ENCODE measurements at regions of chr4 and their contacts with region 1.

Region 1: DNA sequence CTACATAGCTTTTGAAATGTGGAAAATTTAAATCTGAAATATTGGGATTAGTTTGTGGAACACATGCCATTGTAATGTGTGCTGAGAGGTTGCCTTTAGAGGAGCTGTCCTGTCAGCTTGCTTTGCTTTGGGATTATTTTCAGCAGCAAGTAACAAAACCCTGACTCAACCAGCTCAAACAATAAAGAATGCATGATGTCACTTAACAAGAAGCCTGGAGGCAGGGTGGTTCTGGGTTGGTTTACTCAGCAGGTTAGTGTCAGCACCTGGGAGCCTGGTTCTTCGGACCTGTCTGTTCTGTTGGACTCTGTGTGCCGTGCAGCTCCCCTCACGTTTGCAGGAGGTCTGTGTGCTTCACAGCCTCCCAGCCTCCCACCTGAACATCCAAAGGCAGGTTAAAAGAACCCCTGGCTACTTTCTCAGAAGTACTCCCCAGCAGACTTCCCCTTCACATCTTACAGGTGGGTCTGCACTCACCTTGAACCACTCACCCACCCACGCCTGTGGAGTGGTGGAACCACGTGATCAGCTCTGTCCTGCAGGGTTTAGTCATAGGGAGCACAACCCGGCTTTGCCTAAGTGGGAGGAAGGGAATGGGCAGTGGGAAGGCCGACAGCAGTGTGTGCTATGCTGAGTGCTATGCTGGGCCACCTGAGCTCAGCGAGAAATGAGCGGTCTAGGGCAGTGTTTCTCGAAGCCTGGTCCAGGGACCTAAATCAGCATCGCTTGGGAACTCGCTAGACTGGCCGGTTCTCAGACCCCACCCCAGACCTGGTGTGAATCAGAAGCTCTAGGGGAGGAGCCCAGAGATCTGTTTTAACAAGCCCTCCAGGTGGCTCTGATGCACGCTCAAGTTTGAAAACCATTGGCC is 20.4 kb downstream of the TMEM131L start:
- DNase-seq: peak; percentile 61 to 85
- H3K4me3 ChIP-seq: no peak overlapping the region
- H3K27ac ChIP-seq: peak overlapping the region; percentile 83
- H3K4me1 ChIP-seq: peaks cover 24% of the 10 kb centered on the region
- H3K27me3 ChIP-seq: no peaks in the 10 kb centered on the region
- CTCF ChIP-seq: no peak

Region 2: GRCh38 chr4:152996108-152996571 is 490.4 kb before region 1 on chr4:
- CTCF ChIA-PET with region 1: no interaction called
- POLR2A ChIA-PET with region 1: no interaction called
- intact Hi-C with region 1: no loop called
- DNase-seq: peak; percentile 78 to 85
- H3K4me3 ChIP-seq: peak overlapping the region; percentile 31; the same call in 1 of the 2 replicates
- H3K27ac ChIP-seq: peak overlapping the region; percentile 84
- H3K4me1 ChIP-seq: peaks cover 53% of the 10 kb centered on the region
- H3K27me3 ChIP-seq: no peaks in the 10 kb centered on the region
- CTCF ChIP-seq: no peak

Region 3: DNA sequence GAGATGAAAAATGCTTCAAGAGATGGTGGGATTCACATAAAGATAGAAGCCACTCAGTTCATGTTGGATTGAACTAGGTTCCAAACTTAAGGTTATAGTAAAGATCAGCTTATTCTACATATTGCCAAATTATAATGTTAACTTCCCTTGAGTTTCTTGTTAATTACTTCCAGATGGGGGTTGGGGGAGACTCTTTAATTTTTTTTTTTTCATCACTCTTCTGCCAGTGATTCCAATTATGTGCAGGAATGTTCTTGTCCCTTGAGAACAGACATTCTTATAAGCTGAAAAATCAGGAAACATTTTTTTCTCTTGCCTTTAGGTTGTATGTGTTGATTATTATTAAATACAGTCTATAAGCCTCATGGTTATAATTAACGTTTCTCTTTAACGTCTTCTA is 112.1 kb before region 1 on chr4:
- CTCF ChIA-PET with region 1: no interaction called
- POLR2A ChIA-PET with region 1: no interaction called
- intact Hi-C with region 1: no loop called
- DNase-seq: no peak
- H3K4me3 ChIP-seq: no peak overlapping the region
- H3K27ac ChIP-seq: no peak overlapping the region
- H3K4me1 ChIP-seq: no peaks in the 10 kb centered on the region
- H3K27me3 ChIP-seq: no peaks in the 10 kb centered on the region
- CTCF ChIP-seq: no peak

Region 4: DNA sequence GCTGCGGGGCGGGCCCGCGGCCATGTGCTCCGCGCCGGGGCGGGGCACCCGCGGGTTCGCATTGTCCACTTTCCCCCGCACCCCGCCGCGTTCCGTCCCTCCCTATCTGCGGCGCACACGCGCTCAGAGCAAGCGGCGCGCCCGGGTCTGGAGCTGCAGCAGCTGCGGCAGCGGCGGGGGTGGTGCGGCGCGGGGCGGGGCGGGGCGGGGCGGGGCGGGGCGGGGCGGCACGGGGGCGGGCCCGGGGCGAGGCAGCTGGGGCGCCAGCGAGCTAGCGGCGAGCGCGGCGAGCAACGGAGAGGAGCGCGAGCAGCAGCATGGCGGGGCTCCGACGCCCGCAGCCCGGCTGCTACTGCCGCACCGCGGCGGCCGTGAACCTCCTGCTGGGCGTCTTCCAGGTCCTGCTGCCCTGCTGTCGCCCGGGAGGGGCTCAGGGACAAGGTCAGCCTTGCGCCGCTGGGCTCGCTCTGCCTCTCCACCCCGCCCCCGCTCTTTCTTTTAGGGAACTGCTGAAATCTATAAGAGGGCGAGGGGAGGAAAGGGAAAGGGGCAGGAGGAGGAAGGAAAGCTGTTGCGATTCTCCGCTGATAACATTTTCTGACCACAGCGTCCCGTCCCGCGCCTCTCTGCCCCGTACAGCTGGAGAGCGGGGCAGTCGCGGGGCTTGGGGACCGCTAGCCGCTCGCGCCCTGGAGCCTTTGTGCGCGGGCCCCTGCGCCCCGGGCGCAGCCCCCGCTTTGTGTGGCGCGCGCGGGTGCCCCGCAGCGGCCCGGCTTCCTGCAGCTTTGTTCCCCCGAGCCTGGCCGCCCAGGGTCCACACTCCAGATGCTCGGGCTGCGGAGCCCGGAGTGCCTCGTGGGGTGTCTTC is 20.2 kb before region 1 on chr4 and contains the start of gene TMEM131L:
- CTCF ChIA-PET with region 1: interaction called, 6 read pairs
- POLR2A ChIA-PET with region 1: interaction called, 6 read pairs
- intact Hi-C with region 1: loop called (anchors 2 kb)
- DNase-seq: peak in 1 of 2 experiments; percentile 46
- H3K4me3 ChIP-seq: peak within 1 kb of the TSS; percentile 87
- H3K27ac ChIP-seq: peak within 1 kb of the TSS; percentile 62
- H3K4me1 ChIP-seq: peaks cover 27% of the 10 kb centered on the region
- H3K27me3 ChIP-seq: no peaks in the 10 kb centered on the region
- CTCF ChIP-seq: no peak
- total RNA-seq, gene TMEM131L: 3.8 and 6.0 TPM in 2 replicates

Region 5: GRCh38 chr4:153514001-153514526 is 27.5 kb after region 1 on chr4:
- CTCF ChIA-PET with region 1: no interaction called
- POLR2A ChIA-PET with region 1: no interaction called
- intact Hi-C with region 1: no loop called
- DNase-seq: no peak
- H3K4me3 ChIP-seq: no peak overlapping the region
- H3K27ac ChIP-seq: no peak overlapping the region
- H3K4me1 ChIP-seq: no peaks in the 10 kb centered on the region; the same call in 1 of the 2 replicates
- H3K27me3 ChIP-seq: no peaks in the 10 kb centered on the region
- CTCF ChIP-seq: no peak

Measured in PC-9 (cell line).